ENCODE measurements at regions of chr19 and their contacts with region 1.

Region 1: GRCh38 chr19:17511724-17512573 is 500 bp downstream of the PGLS start:
- DNase-seq: peak; percentile 94
- ATAC-seq: peak; percentile 82

Region 2: GRCh38 chr19:17555480-17555928 is 43.6 kb after region 1 on chr19 and contains the start of gene COLGALT1:
- intact Hi-C with region 1: loop called (anchors 5 kb)
- DNase-seq: peak; percentile 100
- ATAC-seq: peak; percentile 97
- total RNA-seq, gene COLGALT1: 35.5 TPM